ENCODE measurements at regions of chr3 and their contacts with region 1.

Region 1: DNA sequence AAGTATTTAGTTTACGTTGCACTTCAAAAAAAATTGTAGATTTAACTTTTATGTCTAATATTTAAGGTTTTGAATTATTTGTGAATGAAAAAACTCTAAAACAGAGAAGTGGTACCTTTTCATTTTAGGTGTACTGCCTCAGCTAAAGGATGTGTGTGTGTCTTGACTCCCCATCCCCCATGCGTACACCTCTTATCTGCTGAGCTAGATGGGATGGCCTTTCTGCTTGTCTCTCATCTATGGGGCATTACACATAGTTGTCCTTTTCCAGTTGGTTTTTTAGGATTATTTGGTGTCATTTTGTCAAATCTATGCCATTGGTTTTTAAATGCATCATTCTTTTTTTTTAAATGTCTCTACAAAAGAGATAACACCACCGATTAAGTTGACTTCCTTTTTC is 110.9 kb downstream of the FNDC3B start:
- DNase-seq: no peak
- ATAC-seq: no peak
- H3K4me3 ChIP-seq: no peak overlapping the region
- H3K27ac ChIP-seq: peak overlapping the region; percentile 92
- H3K4me1 ChIP-seq: peaks cover 84% of the 10 kb centered on the region
- H3K27me3 ChIP-seq: no peaks in the 10 kb centered on the region
- CTCF ChIP-seq: no peak

Region 2: DNA sequence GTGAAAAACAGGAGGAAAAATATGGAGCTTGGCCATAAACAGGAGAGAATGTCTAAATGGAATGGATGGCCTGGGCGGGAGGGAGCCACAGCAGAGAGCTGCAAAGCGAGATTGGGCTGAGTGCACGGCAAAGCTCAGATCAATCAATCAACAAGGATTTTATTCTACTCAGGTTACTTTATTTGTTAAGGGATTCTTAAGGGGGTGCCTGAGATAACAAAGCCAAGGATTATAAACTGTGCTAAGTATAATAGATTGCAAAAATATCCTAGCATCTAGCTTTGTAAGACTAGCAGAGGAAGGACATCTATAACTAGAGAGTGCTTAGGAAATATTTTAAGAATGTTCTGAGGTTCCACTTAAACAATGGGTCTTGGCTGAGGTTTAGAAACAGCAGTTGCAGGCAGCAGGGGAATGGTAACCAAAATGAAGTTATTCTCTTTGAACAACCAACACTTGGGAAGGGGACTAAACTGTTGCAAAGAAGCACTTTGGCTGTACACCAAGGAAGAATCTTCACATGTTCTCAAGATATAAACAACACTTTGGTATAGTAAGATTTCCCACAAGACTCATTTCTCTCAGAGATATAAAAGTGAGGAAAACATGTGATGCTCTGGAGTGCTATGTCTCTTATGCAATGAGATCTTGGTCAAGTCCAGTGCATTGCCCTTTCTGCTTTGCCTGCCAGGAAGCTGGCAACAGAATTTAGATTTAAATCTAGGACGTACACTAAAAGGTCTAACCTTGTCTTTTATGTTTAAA is 271.6 kb before region 1 on chr3:
- CTCF ChIA-PET with region 1: no interaction called
- POLR2A ChIA-PET with region 1: no interaction called
- in situ Hi-C with region 1: no loop called
- intact Hi-C with region 1: no loop called
- DNase-seq: no peak
- ATAC-seq: no peak
- H3K4me3 ChIP-seq: no peak overlapping the region
- H3K27ac ChIP-seq: no peak overlapping the region
- H3K4me1 ChIP-seq: peaks cover 3% of the 10 kb centered on the region; the same call in 1 of the 2 replicates
- H3K27me3 ChIP-seq: peaks cover 10% of the 10 kb centered on the region
- CTCF ChIP-seq: no peak

Region 3: DNA sequence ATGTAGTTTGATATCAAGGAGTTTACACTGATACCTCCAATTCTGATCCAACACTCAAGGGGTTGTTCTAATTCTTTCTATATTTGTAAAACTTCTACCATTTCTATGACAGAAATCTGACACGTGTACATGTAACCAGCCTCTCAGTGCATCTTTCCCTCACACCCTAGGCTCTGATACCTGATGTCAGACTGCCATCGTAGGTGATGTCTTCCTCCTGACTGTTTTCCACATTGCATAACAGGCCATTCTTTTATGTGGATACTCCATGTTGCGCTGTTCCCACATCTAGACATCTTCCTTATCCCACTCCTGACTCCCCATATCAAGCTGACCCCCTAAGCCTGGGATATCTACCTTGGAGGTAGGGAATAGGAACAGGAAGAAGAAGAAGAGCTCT is 48.2 kb after region 1 on chr3:
- CTCF ChIA-PET with region 1: no interaction called
- POLR2A ChIA-PET with region 1: interaction called, 17 read pairs
- in situ Hi-C with region 1: no loop called
- intact Hi-C with region 1: no loop called
- DNase-seq: no peak
- ATAC-seq: no peak
- H3K4me3 ChIP-seq: no peak overlapping the region
- H3K27ac ChIP-seq: no peak overlapping the region
- H3K4me1 ChIP-seq: peaks cover 57% of the 10 kb centered on the region
- H3K27me3 ChIP-seq: no peaks in the 10 kb centered on the region
- CTCF ChIP-seq: no peak